A673 (cell line): ENCODE measurements at regions of chr10 and their contacts with region 1.

Region 1: GRCh38 chr10:44932517-44933450 is 21.6 kb downstream of the TMEM72 start:
- DNase-seq: peak; percentile 79
- H3K4me3 ChIP-seq: no peak overlapping the region
- H3K27ac ChIP-seq: no peak overlapping the region
- H3K4me1 ChIP-seq: no peaks in the 10 kb centered on the region
- H3K27me3 ChIP-seq: no peaks in the 10 kb centered on the region
- CTCF ChIP-seq: peak; percentile 97

Region 2: GRCh38 chr10:44908066-44908749 is 24.6 kb before region 1 on chr10:
- CTCF ChIA-PET with region 1: no interaction called
- POLR2A ChIA-PET with region 1: no interaction called
- intact Hi-C with region 1: no loop called
- DNase-seq: peak; percentile 55
- H3K4me3 ChIP-seq: no peak overlapping the region
- H3K27ac ChIP-seq: peak overlapping the region; percentile 38
- H3K4me1 ChIP-seq: peaks cover 63% of the 10 kb centered on the region
- H3K27me3 ChIP-seq: no peaks in the 10 kb centered on the region
- CTCF ChIP-seq: no peak

Region 3: GRCh38 chr10:44974628-44975431 is 42.0 kb after region 1 on chr10:
- CTCF ChIA-PET with region 1: interaction called, 10 read pairs
- POLR2A ChIA-PET with region 1: no interaction called
- intact Hi-C with region 1: loop called (anchors 5 kb)
- DNase-seq: peak; percentile 68
- H3K4me3 ChIP-seq: peak overlapping the region; percentile 50
- H3K27ac ChIP-seq: peak overlapping the region; percentile 65
- H3K4me1 ChIP-seq: peaks cover 31% of the 10 kb centered on the region
- H3K27me3 ChIP-seq: no peaks in the 10 kb centered on the region
- CTCF ChIP-seq: peak; percentile 76

Region 4: DNA sequence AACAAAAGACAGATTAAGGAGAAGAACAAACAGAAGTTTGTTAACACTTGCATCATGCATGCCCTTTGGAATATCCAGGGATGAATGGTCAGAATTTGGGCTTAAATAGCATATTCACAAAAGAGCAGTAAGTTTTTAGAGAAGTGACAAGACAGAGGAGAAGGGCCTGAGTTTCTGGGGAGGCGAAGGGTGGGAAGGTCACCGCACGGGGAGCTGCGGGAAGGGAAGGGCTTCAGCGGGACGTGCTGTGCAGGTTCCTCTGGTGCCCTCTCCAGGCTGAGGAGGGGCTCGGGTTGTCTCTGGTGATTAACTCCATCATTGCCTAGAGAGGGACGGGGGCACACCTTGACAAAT is 57.5 kb after region 1 on chr10:
- CTCF ChIA-PET with region 1: no interaction called
- POLR2A ChIA-PET with region 1: no interaction called
- intact Hi-C with region 1: loop called (anchors 5 kb)
- DNase-seq: peak; percentile 23
- H3K4me3 ChIP-seq: no peak overlapping the region
- H3K27ac ChIP-seq: no peak overlapping the region
- H3K4me1 ChIP-seq: no peaks in the 10 kb centered on the region
- H3K27me3 ChIP-seq: no peaks in the 10 kb centered on the region
- CTCF ChIP-seq: peak; percentile 51

Region 5: DNA sequence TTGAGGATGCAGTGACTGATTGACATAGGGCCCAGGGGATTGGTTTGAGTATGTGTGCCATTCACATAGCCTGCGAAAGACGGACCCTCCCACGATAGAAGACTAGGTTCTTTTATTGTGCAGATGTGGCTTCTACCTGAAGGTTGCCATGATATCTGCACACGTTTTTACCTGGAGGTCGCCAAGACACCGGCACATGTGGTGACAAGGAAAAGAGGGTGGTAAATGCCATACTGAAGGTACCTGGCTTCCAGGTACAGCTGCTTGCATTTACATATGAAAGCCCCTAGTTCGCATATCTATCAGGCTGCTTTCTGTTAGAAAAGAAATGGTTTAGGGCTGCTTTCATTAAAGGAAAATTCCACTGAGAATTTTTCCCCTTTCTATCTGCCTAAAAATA is 111.5 kb after region 1 on chr10:
- CTCF ChIA-PET with region 1: no interaction called
- POLR2A ChIA-PET with region 1: no interaction called
- intact Hi-C with region 1: no loop called
- DNase-seq: no peak
- H3K4me3 ChIP-seq: no peak overlapping the region
- H3K27ac ChIP-seq: no peak overlapping the region
- H3K4me1 ChIP-seq: no peaks in the 10 kb centered on the region
- H3K27me3 ChIP-seq: no peaks in the 10 kb centered on the region
- CTCF ChIP-seq: no peak